IMR-90 (cell line): ENCODE measurements at regions of chr3 and their contacts with region 1.

Region 1: DNA sequence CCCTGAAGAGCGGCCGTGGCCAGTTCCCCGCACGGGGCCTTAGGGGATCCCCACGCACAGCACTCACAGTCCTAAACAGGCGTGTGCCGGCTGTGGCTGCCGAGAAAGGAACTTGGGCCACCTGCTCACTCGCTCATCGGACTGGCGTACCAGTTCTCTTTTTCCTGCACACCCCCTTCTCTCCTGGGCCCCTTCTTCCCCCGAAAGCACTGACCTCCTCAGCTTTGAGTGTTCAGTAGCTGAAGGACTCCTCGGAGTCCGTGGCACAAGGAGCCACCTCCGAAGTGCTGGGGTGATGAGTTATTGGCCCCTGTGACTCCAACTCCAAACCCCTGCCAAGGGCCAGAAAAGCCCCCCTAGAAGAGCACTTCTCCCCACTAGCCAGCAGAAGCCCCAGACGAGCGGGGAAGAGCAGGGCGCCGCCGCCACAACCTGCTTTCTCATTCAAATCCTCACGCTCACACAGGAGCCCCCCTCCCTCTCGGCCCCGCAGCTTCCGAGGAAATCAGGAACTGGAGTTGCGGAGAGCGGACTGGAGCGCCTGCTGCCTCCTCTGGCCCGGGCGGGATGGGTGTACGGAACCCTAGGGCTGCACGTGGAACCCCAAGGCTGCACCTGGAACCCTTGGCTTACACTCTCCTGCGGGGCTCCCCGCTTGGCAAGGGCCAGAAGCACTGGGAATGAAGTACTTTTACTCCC is at the start of gene PLCH1:
- DNase-seq: peak; percentile 40
- ATAC-seq: peak; percentile 72
- H3K4me3 ChIP-seq: peak within 1 kb of the TSS; percentile 69
- H3K27ac ChIP-seq: no peak within 1 kb of the TSS
- H3K4me1 ChIP-seq: no peaks in the 10 kb centered on the region; the same call in 1 of the 2 replicates
- H3K27me3 ChIP-seq: peaks cover 47% of the 10 kb centered on the region
- CTCF ChIP-seq: no peak
- POLR2A ChIP-seq: no peak
- RAD21 ChIP-seq: no peak
- total RNA-seq, gene PLCH1: not detected in 2 replicates

Region 2: DNA sequence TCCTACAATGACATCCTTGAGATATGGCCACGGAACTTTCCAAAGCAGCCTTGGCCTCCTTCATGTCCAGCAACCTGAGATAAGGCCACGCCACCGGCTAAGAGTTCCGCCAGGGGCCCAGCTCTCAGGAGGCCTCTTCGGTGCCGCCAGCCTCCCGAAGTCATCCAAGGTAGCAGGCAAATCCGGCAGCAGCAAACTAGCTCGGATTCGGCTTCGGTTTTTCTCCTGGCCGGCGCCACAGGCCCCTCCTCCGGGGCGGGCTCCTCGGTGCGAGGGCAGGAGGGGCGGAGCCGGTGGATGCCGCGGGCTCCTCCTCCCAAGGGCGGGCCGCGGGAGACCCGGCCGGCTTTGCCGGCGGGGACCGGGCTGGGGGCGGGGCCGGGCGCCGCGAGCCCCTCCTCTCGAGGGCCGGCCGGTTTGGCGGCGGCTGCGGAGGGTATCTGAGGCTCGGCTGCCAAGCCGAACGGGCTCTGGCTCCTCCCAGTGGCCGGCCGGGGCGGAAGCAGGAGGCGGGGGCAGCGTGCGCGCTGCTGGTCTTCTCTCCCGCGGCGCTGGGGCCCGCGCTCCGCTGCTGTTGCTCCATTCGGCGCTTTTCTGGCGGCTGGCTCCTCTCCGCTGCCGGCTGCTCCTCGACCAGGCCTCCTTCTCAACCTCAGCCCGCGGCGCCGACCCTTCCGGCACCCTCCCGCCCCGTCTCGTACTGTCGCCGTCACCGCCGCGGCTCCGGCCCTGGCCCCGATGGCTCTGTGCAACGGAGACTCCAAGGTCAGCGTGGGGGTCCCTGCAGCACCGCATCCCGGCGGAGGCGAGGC is 125.6 kb after region 1 on chr3 and contains the start of gene GMPS:
- CTCF ChIA-PET with region 1: no interaction called
- POLR2A ChIA-PET with region 1: no interaction called
- dilution Hi-C with region 1: no loop called
- in situ Hi-C with region 1: no loop called
- intact Hi-C with region 1: loop called (anchors 5 kb)
- DNase-seq: peak; percentile 89
- ATAC-seq: peak; percentile 96
- H3K4me3 ChIP-seq: peak within 1 kb of the TSS; percentile 98
- H3K27ac ChIP-seq: peak within 1 kb of the TSS; percentile 87
- H3K4me1 ChIP-seq: peaks cover 4% of the 10 kb centered on the region; the same call in 1 of the 2 replicates
- H3K27me3 ChIP-seq: no peaks in the 10 kb centered on the region
- CTCF ChIP-seq: peak; percentile 69
- POLR2A ChIP-seq: peak; percentile 80
- RAD21 ChIP-seq: peak; percentile 52
- total RNA-seq, gene GMPS: 52.5 and 108 TPM in 2 replicates